CD14-positive monocyte (primary cell): ENCODE measurements at regions of chr3 and their contacts with region 1.

Region 1: DNA sequence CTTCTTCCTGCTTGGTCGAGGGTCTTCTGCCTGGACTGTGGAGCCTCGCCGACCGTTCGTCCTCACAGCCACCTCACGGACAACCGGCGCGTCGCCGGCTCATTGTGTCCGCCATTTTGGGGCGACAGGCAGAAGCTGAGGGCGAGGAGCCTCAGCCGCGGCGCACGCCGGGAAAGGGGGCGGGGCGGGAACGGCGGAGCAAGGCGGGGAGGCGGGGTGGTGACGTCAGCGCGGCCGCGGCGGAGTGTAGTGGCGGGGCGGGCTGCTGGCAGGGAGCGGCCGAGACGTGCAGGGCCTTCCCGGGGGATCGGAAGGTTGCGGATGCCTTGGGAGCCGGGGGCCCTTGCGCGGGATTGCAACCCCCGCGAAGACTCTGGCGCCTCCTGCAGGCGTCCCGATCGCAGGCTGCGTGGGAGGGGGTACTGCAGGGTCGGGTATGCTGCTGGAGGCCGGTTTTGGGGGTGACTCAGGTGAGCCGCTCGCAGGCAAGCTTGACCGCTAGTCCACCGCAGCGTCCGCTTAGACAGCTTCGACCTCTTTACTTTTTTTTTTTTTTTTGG is at the start of gene WDR82:
- DNase-seq: peak; percentile 87 to 93 (median 92)
- H3K4me3 ChIP-seq: peak within 1 kb of the TSS; percentile 74 to 97 (median 89)
- H3K4me3 Mint-ChIP-seq: peak within 1 kb of the TSS; percentile 98 to 100
- H3K27ac ChIP-seq: peak within 1 kb of the TSS; percentile 93 to 97
- H3K27ac Mint-ChIP-seq: peak within 1 kb of the TSS; percentile 95 to 100 (median 99)
- H3K4me1 ChIP-seq: peaks cover 28 to 46% of the 10 kb centered on the region in 2 donors
- H3K4me1 Mint-ChIP-seq: peaks cover 49% of the 10 kb centered on the region
- H3K27me3 ChIP-seq: no peaks in the 10 kb centered on the region
- H3K27me3 Mint-ChIP-seq: peaks cover 0 to 4% (median 0%) of the 10 kb centered on the region in 3 donors
- CTCF ChIP-seq: no peak
- polyA plus RNA-seq, gene WDR82: 27.3 to 33.4 (median 32.3) TPM

Region 2: GRCh38 chr3:52240059-52240879 is 38.3 kb before region 1 on chr3:
- intact Hi-C with region 1: loop called (anchors 5 kb)
- DNase-seq: peak; percentile 61 to 71 (median 65)
- H3K4me3 ChIP-seq: peak overlapping the region in 1 of 3 experiments; percentile 100
- H3K4me3 Mint-ChIP-seq: peak overlapping the region; percentile 67 to 90
- H3K27ac ChIP-seq: peak overlapping the region; percentile 45 to 91
- H3K27ac Mint-ChIP-seq: peak overlapping the region; percentile 86 to 95 (median 92)
- H3K4me1 ChIP-seq: peaks cover 69 to 81% of the 10 kb centered on the region in 2 donors
- H3K4me1 Mint-ChIP-seq: peaks cover 73% of the 10 kb centered on the region
- H3K27me3 ChIP-seq: no peaks in the 10 kb centered on the region
- H3K27me3 Mint-ChIP-seq: no peaks in the 10 kb centered on the region
- CTCF ChIP-seq: no peak

Region 3: DNA sequence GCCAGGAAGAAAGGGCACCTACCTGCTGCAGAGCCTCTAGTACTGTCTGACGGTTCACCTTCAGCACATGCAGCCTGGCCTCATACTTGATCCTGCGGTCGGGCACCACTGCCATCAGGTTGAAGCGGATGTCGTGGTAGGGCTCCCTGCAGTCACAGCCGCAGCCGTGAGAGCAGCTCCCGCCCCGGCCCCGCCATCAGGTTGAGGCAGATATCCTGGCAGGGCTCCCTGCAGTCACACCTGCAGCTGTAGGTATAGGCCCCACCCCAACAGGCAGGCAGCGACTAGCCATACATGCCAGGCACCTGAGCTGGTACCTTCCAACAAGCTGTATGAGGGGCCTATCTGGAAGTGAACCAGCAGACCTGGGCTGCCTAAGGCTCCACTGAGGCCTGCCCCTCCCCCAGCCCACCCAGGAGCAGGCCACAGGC is 127.7 kb after region 1 on chr3:
- intact Hi-C with region 1: loop called in 1 of 2 experiments (anchors 10 kb)
- DNase-seq: no peak
- H3K4me3 ChIP-seq: no peak overlapping the region
- H3K4me3 Mint-ChIP-seq: no peak overlapping the region
- H3K27ac ChIP-seq: no peak overlapping the region
- H3K27ac Mint-ChIP-seq: no peak overlapping the region
- H3K4me1 ChIP-seq: peaks cover 15 to 18% of the 10 kb centered on the region in 2 donors
- H3K4me1 Mint-ChIP-seq: peaks cover 20% of the 10 kb centered on the region
- H3K27me3 ChIP-seq: no peaks in the 10 kb centered on the region
- H3K27me3 Mint-ChIP-seq: no peaks in the 10 kb centered on the region
- CTCF ChIP-seq: no peak

Region 4: GRCh38 chr3:52820736-52821135 is 542.1 kb after region 1 on chr3:
- intact Hi-C with region 1: no loop called
- DNase-seq: peak in 2 of 3 donors; percentile 5 to 15
- H3K4me3 ChIP-seq: no peak overlapping the region
- H3K4me3 Mint-ChIP-seq: no peak overlapping the region
- H3K27ac ChIP-seq: no peak overlapping the region
- H3K27ac Mint-ChIP-seq: peak overlapping the region in 3 of 7 donors; percentile 29 to 69 (median 37)
- H3K4me1 ChIP-seq: no peaks in the 10 kb centered on the region
- H3K4me1 Mint-ChIP-seq: no peaks in the 10 kb centered on the region
- H3K27me3 ChIP-seq: no peaks in the 10 kb centered on the region
- H3K27me3 Mint-ChIP-seq: peaks cover 0 to 2% (median 1%) of the 10 kb centered on the region in 3 donors
- CTCF ChIP-seq: peak; percentile 66